ENCODE measurements at regions of chr4 and their contacts with region 1.

Region 1: DNA sequence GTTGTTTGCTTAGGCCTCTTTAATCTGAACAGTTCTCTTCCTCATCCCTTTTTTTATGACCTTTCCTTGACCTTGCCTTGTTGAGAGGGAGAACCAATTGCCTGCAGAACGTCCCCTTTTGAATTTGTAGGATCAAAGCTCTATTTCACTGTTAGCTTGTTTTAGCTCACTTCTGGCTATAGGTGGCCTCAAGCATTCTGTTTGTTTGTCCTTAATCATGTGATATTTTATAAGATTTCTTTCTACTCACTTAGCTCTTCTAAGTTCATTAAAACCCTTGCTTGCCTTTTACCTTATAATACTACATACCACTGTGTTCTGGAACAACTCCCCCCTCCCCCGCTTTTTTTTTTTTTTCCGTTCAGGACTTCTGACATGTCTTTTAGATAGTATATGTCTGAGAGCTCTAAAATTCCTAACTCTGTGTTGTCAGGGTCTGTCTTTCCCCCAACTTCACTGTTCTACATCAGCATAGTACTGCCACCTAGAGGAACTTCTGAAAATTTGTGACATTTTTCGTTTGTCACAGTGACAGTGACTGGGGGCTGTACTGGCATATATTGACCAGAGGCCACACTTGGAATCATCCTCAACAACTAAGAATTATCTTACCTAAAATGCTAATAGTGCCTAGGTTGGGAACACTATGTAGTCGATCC is 128.5 kb downstream of the LARP7 start:
- DNase-seq: no peak
- H3K4me3 ChIP-seq: no peak overlapping the region
- H3K27ac ChIP-seq: no peak overlapping the region
- H3K4me1 ChIP-seq: no peaks in the 10 kb centered on the region
- H3K27me3 ChIP-seq: no peaks in the 10 kb centered on the region
- CTCF ChIP-seq: peak; percentile 62; the same call in 1 of the 2 replicates

Region 2: GRCh38 chr4:112327965-112328733 is 437.3 kb before region 1 on chr4:
- CTCF ChIA-PET with region 1: no interaction called
- POLR2A ChIA-PET with region 1: no interaction called
- intact Hi-C with region 1: loop called (anchors 10 kb)
- DNase-seq: peak in 1 of 2 experiments; percentile 39
- H3K4me3 ChIP-seq: no peak overlapping the region
- H3K27ac ChIP-seq: no peak overlapping the region
- H3K4me1 ChIP-seq: no peaks in the 10 kb centered on the region
- H3K27me3 ChIP-seq: no peaks in the 10 kb centered on the region
- CTCF ChIP-seq: peak; percentile 71

Region 3: DNA sequence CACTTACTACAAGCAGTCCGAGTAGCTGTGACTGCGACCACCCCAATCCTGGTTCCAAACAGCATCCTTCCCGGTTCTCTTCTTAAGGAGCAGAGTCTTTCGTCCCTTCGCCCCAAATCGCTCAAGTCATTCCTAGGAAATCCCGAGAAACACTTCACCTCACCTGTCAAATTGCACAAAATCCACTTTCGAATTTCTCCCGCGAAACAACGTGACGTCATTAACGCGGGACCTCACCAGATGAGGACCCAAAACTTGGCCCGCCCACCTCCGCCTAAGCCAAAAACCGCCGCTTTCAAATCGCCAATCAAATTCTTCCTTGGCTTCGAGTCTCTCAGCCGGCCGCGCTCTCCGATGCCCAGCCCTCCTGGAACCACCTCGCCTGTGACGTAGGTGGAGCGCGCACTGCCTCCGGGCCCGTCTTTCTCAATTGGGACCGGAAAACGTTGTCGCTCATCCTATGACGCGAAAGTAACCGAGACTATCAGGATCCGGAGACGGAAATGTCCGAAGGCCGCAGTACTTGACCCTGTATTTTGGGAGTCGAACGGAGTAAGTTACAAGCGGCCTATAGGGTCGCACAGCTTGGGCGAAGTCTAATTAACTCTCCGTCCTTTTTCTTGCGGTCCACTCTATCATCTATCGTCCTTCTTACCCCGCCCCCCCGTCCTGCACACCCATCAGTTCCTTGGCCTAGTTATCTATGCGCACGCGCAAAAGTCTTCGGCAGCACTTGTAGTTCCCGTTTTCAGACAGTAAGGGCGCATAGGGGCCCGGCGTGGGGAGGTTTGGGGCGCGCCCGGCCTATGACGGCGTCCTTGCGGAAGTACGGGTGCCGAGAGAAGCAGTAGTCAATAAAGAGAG is 128.5 kb before region 1 on chr4 and contains the starts of genes LARP7 and ZGRF1:
- CTCF ChIA-PET with region 1: interaction called, 4 read pairs
- POLR2A ChIA-PET with region 1: no interaction called
- intact Hi-C with region 1: loop called (anchors 1 kb)
- DNase-seq: peak; percentile 97 to 98
- H3K4me3 ChIP-seq: peak within 1 kb of the TSS; percentile 76
- H3K27ac ChIP-seq: peak within 1 kb of the TSS; percentile 78
- H3K4me1 ChIP-seq: peaks cover 20% of the 10 kb centered on the region
- H3K27me3 ChIP-seq: no peaks in the 10 kb centered on the region
- CTCF ChIP-seq: peak; percentile 100
- total RNA-seq, gene LARP7: 35.8 and 47.8 TPM in 2 replicates
- total RNA-seq, gene ZGRF1: 17.3 and 18.9 TPM in 2 replicates

Region 4: GRCh38 chr4:112726031-112726430 is 39.4 kb before region 1 on chr4:
- CTCF ChIA-PET with region 1: interaction called, 11 read pairs
- POLR2A ChIA-PET with region 1: no interaction called
- intact Hi-C with region 1: no loop called
- DNase-seq: peak; percentile 40 to 77
- H3K4me3 ChIP-seq: no peak overlapping the region
- H3K27ac ChIP-seq: no peak overlapping the region
- H3K4me1 ChIP-seq: peaks cover 14% of the 10 kb centered on the region
- H3K27me3 ChIP-seq: no peaks in the 10 kb centered on the region
- CTCF ChIP-seq: no peak

Region 5: DNA sequence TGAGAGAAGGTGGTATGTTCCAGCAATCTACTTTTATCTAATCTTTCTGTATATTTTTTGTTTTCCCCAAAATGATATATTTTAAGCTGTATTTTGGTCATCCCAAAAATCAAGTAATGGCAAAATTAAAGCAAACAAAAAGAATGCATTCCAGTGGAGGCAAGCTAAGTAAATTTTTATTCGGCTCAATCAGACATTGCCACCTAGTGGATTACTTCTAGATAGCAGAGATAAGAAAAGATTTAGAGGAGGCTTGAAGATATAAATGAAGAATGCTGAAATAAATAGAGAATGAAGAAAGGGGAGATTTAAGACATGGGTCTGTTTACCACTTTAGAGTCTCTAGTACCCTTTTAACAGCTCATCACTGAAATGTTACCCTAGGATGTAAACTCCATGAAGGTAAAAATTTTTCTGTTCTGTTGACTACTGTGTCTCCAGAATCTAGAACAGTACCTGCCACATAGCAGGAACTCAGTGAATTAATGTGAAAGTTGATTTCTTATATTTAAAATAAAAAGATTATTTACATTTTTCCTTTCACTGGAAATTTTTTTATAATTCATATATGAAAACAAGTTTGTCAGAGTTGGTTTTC is 173.1 kb after region 1 on chr4:
- CTCF ChIA-PET with region 1: interaction called, 5 read pairs
- POLR2A ChIA-PET with region 1: interaction called, 5 read pairs
- intact Hi-C with region 1: loop called (anchors 1 kb)
- DNase-seq: no peak
- H3K4me3 ChIP-seq: no peak overlapping the region
- H3K27ac ChIP-seq: no peak overlapping the region
- H3K4me1 ChIP-seq: no peaks in the 10 kb centered on the region
- H3K27me3 ChIP-seq: no peaks in the 10 kb centered on the region
- CTCF ChIP-seq: peak; percentile 72

Region 6: GRCh38 chr4:113094802-113095201 is 329.4 kb after region 1 on chr4:
- CTCF ChIA-PET with region 1: no interaction called
- POLR2A ChIA-PET with region 1: no interaction called
- intact Hi-C with region 1: loop called (anchors 2 kb)
- DNase-seq: no peak
- H3K4me3 ChIP-seq: no peak overlapping the region
- H3K27ac ChIP-seq: no peak overlapping the region
- H3K4me1 ChIP-seq: no peaks in the 10 kb centered on the region
- H3K27me3 ChIP-seq: no peaks in the 10 kb centered on the region
- CTCF ChIP-seq: peak; percentile 77